ENCODE measurements at regions of chr2 and their contacts with region 1.

Region 1: DNA sequence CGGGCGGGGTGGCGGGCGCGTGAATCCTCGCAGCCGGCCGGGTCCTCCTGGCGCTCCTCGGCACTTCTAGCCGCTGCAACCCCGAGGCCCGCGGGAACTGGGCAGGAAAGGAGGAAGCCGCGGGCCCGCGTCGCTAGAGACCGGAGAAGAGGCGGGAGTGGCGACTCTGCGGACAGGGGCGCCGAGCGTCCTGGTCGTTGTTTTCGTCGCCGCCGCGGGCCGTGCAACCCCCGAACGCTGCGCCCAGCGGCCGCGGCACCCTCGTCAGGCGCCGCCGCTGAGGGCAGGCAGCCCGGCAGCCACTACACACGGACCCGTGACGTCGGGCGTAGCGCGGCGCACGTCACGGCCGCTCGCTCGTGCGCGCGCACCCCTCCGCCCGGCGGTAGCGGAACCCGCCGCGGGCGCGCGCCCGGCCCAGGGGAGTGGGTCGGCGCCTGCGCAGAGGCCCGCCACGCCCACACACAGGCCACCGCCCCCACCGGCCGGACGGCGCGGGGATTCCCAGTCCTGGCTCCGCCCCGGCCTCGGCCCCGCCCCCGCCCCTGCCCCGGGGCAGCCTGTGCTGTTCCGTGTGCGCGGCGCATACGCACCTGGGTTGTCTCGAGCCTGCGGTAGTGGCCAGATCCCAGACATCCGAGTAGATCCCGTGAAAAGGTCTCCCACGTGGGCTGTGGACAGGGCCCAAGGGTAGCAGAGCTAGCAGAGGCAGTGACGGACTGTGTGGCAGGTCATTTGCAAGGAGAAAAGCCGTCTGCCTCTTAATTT is at the start of gene MAP3K2:
- DNase-seq: peak; percentile 89
- H3K4me3 Mint-ChIP-seq: peak within 1 kb of the TSS; percentile 96
- H3K27ac Mint-ChIP-seq: peak within 1 kb of the TSS; percentile 98
- H3K4me1 Mint-ChIP-seq: peaks cover 74% of the 10 kb centered on the region
- H3K27me3 Mint-ChIP-seq: no peaks in the 10 kb centered on the region
- total RNA-seq, gene MAP3K2: 64.1 and 66.1 TPM in 2 replicates

Region 2: GRCh38 chr2:127226520-127227263 is 161.1 kb before region 1 on chr2:
- intact Hi-C with region 1: loop called (anchors 1 kb)
- DNase-seq: peak; percentile 13
- H3K4me3 Mint-ChIP-seq: peak overlapping the region; percentile 71
- H3K27ac Mint-ChIP-seq: peak overlapping the region; percentile 82
- H3K4me1 Mint-ChIP-seq: peaks cover 6% of the 10 kb centered on the region
- H3K27me3 Mint-ChIP-seq: peaks cover 20% of the 10 kb centered on the region

Region 3: DNA sequence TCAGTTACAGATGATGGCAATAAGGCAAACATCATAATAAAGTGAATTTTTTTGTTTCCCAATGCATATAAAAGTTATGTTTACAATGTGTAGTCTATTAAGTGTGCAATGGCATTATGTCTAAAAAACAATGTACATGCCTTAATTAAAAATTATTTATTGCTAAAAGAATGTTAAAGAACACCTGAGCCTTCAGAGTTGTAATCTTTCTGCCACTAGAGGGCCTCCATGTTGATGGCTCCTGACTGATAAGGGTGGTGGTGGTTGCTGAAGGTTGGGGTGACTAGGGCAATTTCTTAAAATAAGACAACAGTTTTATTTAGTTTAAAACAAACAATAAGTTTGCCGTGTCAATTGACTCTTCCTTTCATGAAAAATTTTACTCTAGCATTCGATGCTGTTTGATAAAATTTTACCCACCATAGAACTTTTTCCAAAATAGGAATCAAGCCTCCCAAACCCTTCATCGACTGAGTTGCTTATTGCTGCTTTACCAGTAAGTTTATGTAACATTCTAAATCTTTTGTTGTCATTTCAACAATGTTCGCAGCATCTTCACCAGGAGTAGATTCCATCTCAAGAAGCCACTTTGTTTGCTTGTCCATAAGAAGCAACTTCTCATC is 32.3 kb before region 1 on chr2:
- intact Hi-C with region 1: loop called (anchors 1 kb)
- DNase-seq: peak; percentile 22
- H3K4me3 Mint-ChIP-seq: no peak overlapping the region
- H3K27ac Mint-ChIP-seq: no peak overlapping the region
- H3K4me1 Mint-ChIP-seq: peaks cover 21% of the 10 kb centered on the region
- H3K27me3 Mint-ChIP-seq: no peaks in the 10 kb centered on the region

Region 4: DNA sequence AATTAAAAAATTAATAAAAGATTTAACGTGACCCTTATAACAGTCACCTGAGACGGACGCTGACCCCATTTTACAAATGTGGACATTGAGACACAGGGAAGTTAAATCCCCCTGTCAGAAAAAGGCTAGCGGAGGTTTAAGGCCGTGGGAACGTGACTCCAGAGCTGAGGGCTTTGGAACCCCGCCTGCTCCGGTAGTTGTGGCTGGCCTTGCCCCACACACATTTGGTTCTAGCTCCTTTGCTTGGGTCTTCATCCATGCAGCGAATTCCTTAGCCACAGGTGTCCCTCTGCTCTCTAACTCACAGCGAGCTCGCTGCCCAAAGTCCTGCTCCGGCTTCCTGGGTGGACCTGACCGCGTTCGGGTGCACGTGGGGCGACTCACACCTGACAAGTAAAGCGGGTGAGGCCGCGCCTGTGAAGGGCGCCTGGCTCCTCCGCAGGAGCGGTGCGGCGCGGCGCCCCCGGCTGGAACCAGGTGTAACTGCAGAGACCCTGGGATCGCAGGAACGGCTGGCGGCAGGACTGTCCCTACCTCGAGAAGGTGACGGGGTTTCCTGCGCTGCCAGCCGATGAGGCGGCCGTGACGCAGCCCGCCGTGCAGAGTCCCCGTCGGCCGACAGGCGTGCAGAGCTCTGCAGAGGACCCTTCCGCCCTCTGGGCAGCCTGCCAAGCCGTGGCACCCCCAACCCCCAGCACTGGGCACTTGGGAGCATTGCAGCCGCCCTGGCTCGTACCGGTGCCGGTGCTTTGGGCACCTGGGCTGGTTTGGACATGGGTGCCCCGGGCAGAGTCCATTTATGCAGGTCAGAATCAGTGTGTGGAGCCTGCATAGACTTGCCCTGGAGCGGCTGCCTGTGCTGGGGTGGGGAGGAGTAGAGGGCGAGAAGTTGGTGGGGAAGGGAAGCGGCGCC is 28.0 kb after region 1 on chr2:
- intact Hi-C with region 1: loop called (anchors 1 kb)
- DNase-seq: peak; percentile 67
- H3K4me3 Mint-ChIP-seq: peak overlapping the region; percentile 71
- H3K27ac Mint-ChIP-seq: peak overlapping the region; percentile 29
- H3K4me1 Mint-ChIP-seq: peaks cover 51% of the 10 kb centered on the region
- H3K27me3 Mint-ChIP-seq: peaks cover 14% of the 10 kb centered on the region

Region 5: GRCh38 chr2:127810619-127811396 is 423.0 kb after region 1 on chr2 and contains the start of gene WDR33:
- intact Hi-C with region 1: loop called (anchors 5 kb)
- DNase-seq: peak; percentile 94
- H3K4me3 Mint-ChIP-seq: peak within 1 kb of the TSS; percentile 95
- H3K27ac Mint-ChIP-seq: peak within 1 kb of the TSS; percentile 94
- H3K4me1 Mint-ChIP-seq: peaks cover 42% of the 10 kb centered on the region
- H3K27me3 Mint-ChIP-seq: peaks cover 6% of the 10 kb centered on the region
- total RNA-seq, gene WDR33: 81.0 and 82.4 TPM in 2 replicates

Region 6: DNA sequence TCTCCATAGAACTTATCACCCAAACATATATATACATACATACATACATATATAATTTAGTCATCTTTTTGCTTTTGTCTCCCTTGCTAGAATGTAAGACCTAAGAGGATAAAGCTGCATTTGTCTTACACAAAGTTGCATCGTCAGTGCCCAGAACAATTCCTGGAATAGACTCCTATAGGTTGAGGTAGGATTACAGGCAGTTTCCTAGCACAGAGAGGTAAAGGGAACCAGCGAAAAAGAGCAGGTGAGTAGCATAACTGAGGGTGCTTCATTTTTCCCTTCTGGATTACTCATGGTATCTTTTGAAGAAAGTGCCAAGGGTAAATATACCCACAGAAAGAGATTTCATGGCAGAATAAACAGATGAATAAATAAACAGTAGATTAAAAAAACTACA is 566.0 kb after region 1 on chr2:
- intact Hi-C with region 1: no loop called
- DNase-seq: no peak
- H3K4me3 Mint-ChIP-seq: no peak overlapping the region
- H3K27ac Mint-ChIP-seq: no peak overlapping the region
- H3K4me1 Mint-ChIP-seq: no peaks in the 10 kb centered on the region
- H3K27me3 Mint-ChIP-seq: no peaks in the 10 kb centered on the region